ENCODE measurements at regions of chr4 and their contacts with region 1.

Region 1: DNA sequence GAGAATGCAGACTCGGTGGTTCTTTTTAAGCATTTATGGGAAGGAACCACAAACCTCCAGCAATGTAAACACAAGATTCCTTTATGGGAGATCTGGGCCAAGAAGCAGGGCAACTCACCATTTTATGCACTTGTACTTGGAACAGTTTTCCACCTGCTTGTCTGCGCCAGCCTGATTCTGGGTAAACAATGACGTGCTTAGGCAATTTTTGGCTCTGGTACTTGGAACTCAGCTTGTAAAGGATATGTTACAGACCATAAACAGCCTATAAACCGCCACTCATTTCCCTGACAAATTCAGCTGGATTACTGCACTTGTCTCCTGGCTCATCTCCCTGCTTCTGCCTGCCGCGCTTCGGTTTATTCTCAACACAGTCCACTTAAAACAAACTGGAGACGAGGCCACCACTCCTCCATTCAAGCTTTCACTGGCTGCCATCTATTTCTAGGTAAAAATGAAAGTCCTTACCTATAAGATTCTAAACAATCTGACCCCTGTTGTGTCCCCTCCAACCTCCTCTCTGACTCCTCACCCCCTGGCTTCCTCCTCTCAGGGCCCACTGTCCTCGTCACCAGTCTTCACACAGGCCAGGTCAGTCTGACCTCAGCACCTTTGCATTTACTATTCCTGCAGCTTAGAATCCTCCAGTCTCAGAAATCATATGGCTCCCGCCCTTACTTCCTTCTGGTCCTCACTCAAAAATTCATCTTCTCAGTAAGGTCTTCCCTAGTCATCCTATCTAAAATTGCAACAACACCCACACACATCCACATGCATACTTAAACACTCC is 205.9 kb upstream of the GALNT7 start:
- DNase-seq: peak; percentile 93
- ATAC-seq: peak; percentile 98
- H3K4me3 ChIP-seq: no peak overlapping the region
- H3K27ac ChIP-seq: 0 out of 2 replicates have a peak overlapping the region, but pooled peaks have one; percentile 14
- H3K4me1 ChIP-seq: peaks cover 13% of the 10 kb centered on the region
- H3K27me3 ChIP-seq: peaks cover 19% of the 10 kb centered on the region
- CTCF ChIP-seq: no peak

Region 2: GRCh38 chr4:172982151-172982590 is 19.4 kb after region 1 on chr4:
- CTCF ChIA-PET with region 1: no interaction called
- POLR2A ChIA-PET with region 1: no interaction called
- intact Hi-C with region 1: loop called (anchors 2 kb)
- DNase-seq: peak; percentile 92
- ATAC-seq: peak; percentile 96
- H3K4me3 ChIP-seq: no peak overlapping the region
- H3K27ac ChIP-seq: peak overlapping the region; percentile 52
- H3K4me1 ChIP-seq: peaks cover 30% of the 10 kb centered on the region
- H3K27me3 ChIP-seq: no peaks in the 10 kb centered on the region
- CTCF ChIP-seq: no peak

Region 3: GRCh38 chr4:172998527-172999469 is 36.0 kb after region 1 on chr4:
- CTCF ChIA-PET with region 1: no interaction called
- POLR2A ChIA-PET with region 1: no interaction called
- intact Hi-C with region 1: loop called (anchors 1 kb)
- DNase-seq: peak; percentile 51
- ATAC-seq: peak; percentile 13; the same call in 1 of the 2 replicates
- H3K4me3 ChIP-seq: no peak overlapping the region
- H3K27ac ChIP-seq: peak overlapping the region; percentile 53
- H3K4me1 ChIP-seq: peaks cover 42% of the 10 kb centered on the region
- H3K27me3 ChIP-seq: no peaks in the 10 kb centered on the region
- CTCF ChIP-seq: no peak

Region 4: GRCh38 chr4:173138624-173139023 is 175.9 kb after region 1 on chr4:
- CTCF ChIA-PET with region 1: no interaction called
- POLR2A ChIA-PET with region 1: no interaction called
- intact Hi-C with region 1: no loop called
- DNase-seq: no peak
- ATAC-seq: no peak
- H3K4me3 ChIP-seq: no peak overlapping the region
- H3K27ac ChIP-seq: no peak overlapping the region
- H3K4me1 ChIP-seq: no peaks in the 10 kb centered on the region
- H3K27me3 ChIP-seq: no peaks in the 10 kb centered on the region
- CTCF ChIP-seq: no peak

Region 5: GRCh38 chr4:173288296-173288695 is 325.5 kb after region 1 on chr4:
- CTCF ChIA-PET with region 1: no interaction called
- POLR2A ChIA-PET with region 1: no interaction called
- intact Hi-C with region 1: no loop called
- DNase-seq: peak; percentile 72
- ATAC-seq: no peak
- H3K4me3 ChIP-seq: no peak overlapping the region
- H3K27ac ChIP-seq: no peak overlapping the region
- H3K4me1 ChIP-seq: no peaks in the 10 kb centered on the region
- H3K27me3 ChIP-seq: no peaks in the 10 kb centered on the region
- CTCF ChIP-seq: peak; percentile 67